Naive thymus-derived CD4-positive, alpha-beta T cell (primary cell): ENCODE measurements at regions of chr16 and their contacts with region 1.

Region 1: DNA sequence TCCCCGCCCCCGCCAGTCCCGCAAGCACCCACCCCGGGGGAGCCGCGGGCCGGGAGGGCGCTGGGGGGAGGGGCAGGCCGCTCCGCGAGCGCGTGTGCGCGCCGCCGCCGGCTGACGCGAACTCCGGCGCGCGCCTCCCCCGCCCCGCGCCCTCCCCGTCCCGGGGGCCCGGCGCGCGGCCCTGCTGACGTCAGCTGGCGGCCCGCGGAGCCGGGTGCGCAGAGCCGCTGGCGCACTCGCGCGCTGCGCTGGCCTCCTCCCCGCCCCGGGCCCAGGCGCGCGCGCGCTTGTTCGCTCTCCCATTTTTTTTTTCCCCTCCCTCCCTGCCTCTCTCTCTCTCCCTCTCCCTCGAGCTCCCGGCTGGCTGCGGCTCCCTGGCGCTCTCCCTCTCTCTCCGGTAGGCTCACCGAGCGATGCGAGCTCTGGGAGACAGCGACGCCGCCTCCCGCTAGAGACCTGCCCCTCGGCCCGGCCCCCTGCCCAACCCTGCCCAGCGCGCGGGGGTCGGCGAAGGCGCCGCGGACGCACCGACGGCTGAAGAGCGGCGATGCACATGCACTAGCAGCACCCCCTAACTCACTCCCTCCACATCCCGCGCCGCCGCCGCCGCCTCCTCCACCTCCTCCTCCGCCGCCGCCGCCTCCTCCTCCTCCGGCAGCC is at the start of gene GNAO1:
- DNase-seq: peak in 5 of 9 donors; percentile 18 to 73 (median 43)
- ATAC-seq: peak; percentile 81
- H3K4me3 ChIP-seq: peak within 1 kb of the TSS; percentile 52
- H3K4me3 Mint-ChIP-seq: peak within 1 kb of the TSS; percentile 67 to 82 (median 80)
- H3K27ac ChIP-seq: no peak within 1 kb of the TSS
- H3K27ac Mint-ChIP-seq: peak within 1 kb of the TSS in 1 of 9 donors; percentile 70
- H3K4me1 ChIP-seq: peaks cover 12 to 17% of the 10 kb centered on the region in 2 donors
- H3K4me1 Mint-ChIP-seq: peaks cover 16 to 32% (median 25%) of the 10 kb centered on the region in 7 donors
- H3K27me3 ChIP-seq: peaks cover 0 to 13% of the 10 kb centered on the region in 2 donors
- H3K27me3 Mint-ChIP-seq: peaks cover 41 to 90% (median 43%) of the 10 kb centered on the region in 5 donors
- total RNA-seq, gene GNAO1: 0.43 to 5.4 (median 2.8) TPM in 4 of 5 experiments, not detected in the other

Region 2: GRCh38 chr16:55508941-55509931 is 682.0 kb before region 1 on chr16 and contains the start of gene LPCAT2:
- CTCF ChIA-PET with region 1: no interaction called
- POLR2A ChIA-PET with region 1: no interaction called
- intact Hi-C with region 1: loop called in 1 of 2 experiments (anchors 10 kb)
- DNase-seq: peak in 3 of 9 donors; percentile 9 to 65 (median 17)
- ATAC-seq: peak; percentile 85
- H3K4me3 ChIP-seq: no peak within 1 kb of the TSS
- H3K4me3 Mint-ChIP-seq: peak within 1 kb of the TSS; percentile 17 to 87 (median 69)
- H3K27ac ChIP-seq: no peak within 1 kb of the TSS
- H3K27ac Mint-ChIP-seq: peak within 1 kb of the TSS in 1 of 9 donors; percentile 64
- H3K4me1 ChIP-seq: no peaks in the 10 kb centered on the region
- H3K4me1 Mint-ChIP-seq: peaks cover 5 to 14% (median 9%) of the 10 kb centered on the region in 7 donors
- H3K27me3 ChIP-seq: peaks cover 0 to 5% of the 10 kb centered on the region in 2 donors
- H3K27me3 Mint-ChIP-seq: peaks cover 41 to 72% (median 53%) of the 10 kb centered on the region in 5 donors
- total RNA-seq, gene LPCAT2: 1.1 to 16.9 (median 2.5) TPM

Region 3: DNA sequence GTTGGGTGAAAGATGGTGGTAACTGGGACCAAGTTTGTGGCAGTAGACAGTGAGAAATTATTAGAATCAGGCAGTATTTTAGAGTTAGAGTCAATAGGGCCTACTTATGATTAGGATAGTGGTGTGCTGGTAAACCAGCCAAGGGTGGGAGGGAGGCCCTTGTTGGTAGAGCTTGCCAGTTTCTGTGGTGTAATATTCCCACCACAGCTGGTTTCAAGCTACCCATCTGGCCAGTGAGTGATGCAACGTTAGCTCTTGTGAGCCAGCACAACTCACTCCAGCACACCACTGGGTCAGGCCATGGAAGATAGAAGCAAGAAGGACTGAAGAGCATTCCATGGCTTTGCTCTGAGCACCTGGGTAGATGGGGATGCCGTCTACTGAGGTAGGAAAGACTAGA is 34.9 kb after region 1 on chr16:
- CTCF ChIA-PET with region 1: no interaction called
- POLR2A ChIA-PET with region 1: no interaction called
- intact Hi-C with region 1: loop called in 1 of 2 experiments (anchors 5 kb)
- DNase-seq: no peak
- ATAC-seq: no peak
- H3K4me3 ChIP-seq: no peak overlapping the region
- H3K4me3 Mint-ChIP-seq: peak overlapping the region in 2 of 10 donors; percentile 5 to 56
- H3K27ac ChIP-seq: no peak overlapping the region
- H3K27ac Mint-ChIP-seq: peak overlapping the region in 1 of 9 donors; percentile 13
- H3K4me1 ChIP-seq: peaks cover 5 to 34% of the 10 kb centered on the region in 2 donors
- H3K4me1 Mint-ChIP-seq: peaks cover 24 to 36% (median 28%) of the 10 kb centered on the region in 7 donors
- H3K27me3 ChIP-seq: no peaks in the 10 kb centered on the region
- H3K27me3 Mint-ChIP-seq: peaks cover 0 to 44% (median 0%) of the 10 kb centered on the region in 5 donors

Region 4: GRCh38 chr16:56246051-56246817 is 54.9 kb after region 1 on chr16:
- CTCF ChIA-PET with region 1: no interaction called
- POLR2A ChIA-PET with region 1: no interaction called
- intact Hi-C with region 1: no loop called
- DNase-seq: no peak
- ATAC-seq: no peak
- H3K4me3 ChIP-seq: no peak overlapping the region
- H3K4me3 Mint-ChIP-seq: no peak overlapping the region
- H3K27ac ChIP-seq: no peak overlapping the region
- H3K27ac Mint-ChIP-seq: no peak overlapping the region
- H3K4me1 ChIP-seq: no peaks in the 10 kb centered on the region
- H3K4me1 Mint-ChIP-seq: peaks cover 0 to 6% (median 0%) of the 10 kb centered on the region in 7 donors
- H3K27me3 ChIP-seq: no peaks in the 10 kb centered on the region
- H3K27me3 Mint-ChIP-seq: peaks cover 0 to 7% (median 0%) of the 10 kb centered on the region in 5 donors

Region 5: DNA sequence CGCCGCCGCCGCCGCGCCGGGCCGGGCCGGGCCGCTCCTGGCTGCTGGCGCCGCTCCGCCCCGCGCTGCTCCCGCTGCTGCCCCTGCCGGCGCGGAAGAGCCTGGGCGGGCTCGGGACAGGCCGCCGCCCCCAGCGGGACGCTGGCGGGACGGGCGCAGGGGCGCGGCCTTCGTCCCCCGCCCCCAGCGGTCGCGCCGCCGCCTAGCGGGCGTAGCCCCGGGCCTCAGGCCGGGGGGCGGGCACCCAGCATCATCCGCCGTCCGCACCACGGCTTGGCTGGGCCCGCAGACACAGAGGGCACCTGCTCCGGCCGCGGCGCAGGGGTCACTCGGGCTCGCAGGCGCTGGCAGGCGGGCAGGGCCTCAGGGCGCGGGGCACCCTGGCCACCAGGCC is 234.2 kb after region 1 on chr16 and contains the start of gene AMFR:
- CTCF ChIA-PET with region 1: no interaction called
- POLR2A ChIA-PET with region 1: no interaction called
- intact Hi-C with region 1: loop called in 1 of 2 experiments (anchors 10 kb)
- DNase-seq: peak; percentile 57 to 86 (median 68)
- ATAC-seq: peak; percentile 97
- H3K4me3 ChIP-seq: peak within 1 kb of the TSS; percentile 73
- H3K4me3 Mint-ChIP-seq: peak within 1 kb of the TSS; percentile 95 to 100 (median 98)
- H3K27ac ChIP-seq: peak within 1 kb of the TSS; percentile 82
- H3K27ac Mint-ChIP-seq: peak within 1 kb of the TSS; percentile 74 to 96 (median 94)
- H3K4me1 ChIP-seq: peaks cover 6 to 8% of the 10 kb centered on the region in 2 donors
- H3K4me1 Mint-ChIP-seq: peaks cover 32 to 45% (median 40%) of the 10 kb centered on the region in 7 donors
- H3K27me3 ChIP-seq: no peaks in the 10 kb centered on the region
- H3K27me3 Mint-ChIP-seq: no peaks in the 10 kb centered on the region
- total RNA-seq, gene AMFR: 45.5 to 83.3 (median 62.0) TPM